Dorsolateral prefrontal cortex (tissue), 120 donors: ENCODE measurements at regions of chr6 and their contacts with region 1.

Region 1: DNA sequence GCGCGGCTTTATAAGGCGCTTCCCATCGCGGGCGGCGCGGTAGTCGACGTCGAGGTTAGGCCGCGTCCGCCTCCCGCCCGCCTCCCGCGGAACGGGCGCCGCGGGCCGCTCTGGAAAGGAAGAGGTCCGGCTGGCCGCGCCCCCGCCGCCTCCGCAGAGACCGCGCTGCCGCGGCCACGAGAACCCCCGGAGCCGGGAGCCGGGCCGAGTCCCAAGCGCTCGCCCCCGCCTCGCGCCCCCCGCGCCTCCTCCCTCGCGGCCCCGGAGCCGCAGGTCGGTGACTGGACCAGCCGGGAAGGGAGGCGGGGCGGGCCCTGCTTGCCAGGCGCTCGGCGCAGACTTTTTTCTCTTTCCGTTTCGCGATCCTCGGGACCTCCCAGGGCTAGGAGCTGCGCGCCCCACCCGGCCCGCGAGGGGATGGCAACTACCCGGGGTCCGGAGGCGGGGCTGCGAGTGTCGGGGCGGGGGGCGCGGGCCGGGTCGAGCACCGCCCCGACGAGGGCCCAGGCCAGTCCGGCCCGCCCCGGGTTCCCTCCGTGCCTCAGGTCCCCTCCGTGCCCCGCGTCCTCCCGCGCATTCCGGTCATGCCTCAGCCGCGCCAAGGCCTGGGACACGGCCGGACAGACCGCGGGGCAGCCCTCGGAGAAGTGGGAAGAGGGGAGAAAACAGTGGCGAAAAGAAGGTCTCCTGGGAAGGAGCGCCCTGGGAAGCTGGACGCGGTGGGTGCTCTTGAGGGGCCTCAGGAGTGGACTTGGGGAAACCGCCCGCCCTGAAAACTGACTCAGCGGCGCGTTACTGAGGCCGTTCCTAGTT is 423 bp upstream of the PXDC1 start:
- DNase-seq: peak in 8 of 10 donors; percentile 26 to 83 (median 66)
- H3K4me3 ChIP-seq: peak overlapping the region; percentile 47 to 80 (median 72)
- H3K27ac ChIP-seq: peak overlapping the region in 58 of 59 donors; percentile 22 to 98 (median 92)
- H3K27me3 ChIP-seq: no peaks in the 10 kb centered on the region
- CTCF ChIP-seq: peak in 39 of 56 donors; percentile 13 to 59 (median 28)

Region 2: GRCh38 chr6:3797231-3798054 is 45.5 kb after region 1 on chr6:
- intact Hi-C with region 1: loop called (anchors 2 to 5 kb)
- DNase-seq: no peak
- H3K4me3 ChIP-seq: no peak overlapping the region
- H3K27ac ChIP-seq: peak overlapping the region in 32 of 59 donors; percentile 36 to 95 (median 86)
- H3K27me3 ChIP-seq: no peaks in the 10 kb centered on the region
- CTCF ChIP-seq: no peak